ENCODE measurements at regions of chr2 and their contacts with region 1.

Region 1: DNA sequence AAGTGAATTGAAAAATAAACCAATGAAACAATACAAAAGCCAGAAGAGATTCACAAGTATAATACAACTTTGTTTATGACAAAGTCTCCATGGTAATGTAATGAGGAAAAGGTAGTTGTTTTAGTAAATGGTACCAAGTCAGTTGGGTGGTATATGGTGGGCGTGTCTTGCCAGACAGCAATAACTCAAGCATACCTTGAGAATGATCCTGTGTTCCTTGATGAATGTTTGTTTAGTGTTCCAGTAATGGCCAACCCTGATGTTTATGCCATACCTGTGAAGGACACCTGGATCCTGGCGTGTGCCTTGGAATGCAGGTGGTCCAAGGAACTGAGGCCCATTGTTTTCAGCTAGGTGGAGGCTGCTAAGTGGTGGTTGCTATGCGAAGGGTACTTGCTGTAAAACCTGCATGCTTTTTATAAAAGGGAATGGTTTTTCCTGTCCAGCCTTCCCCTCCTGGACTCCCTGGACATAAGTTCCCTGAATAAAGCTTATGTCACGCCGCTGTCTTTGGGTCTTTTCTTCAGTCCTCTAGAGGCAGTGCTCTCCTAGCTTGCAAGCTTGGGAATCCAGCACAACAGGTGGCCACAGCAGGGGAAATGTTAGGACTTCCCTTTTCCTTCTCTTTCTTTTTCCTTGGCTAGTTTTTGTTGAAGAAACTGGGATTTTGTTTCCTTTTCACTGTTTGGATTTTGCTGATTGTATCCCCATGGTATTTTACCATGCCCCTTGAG is 54.7 kb downstream of the MTA3 start:
- DNase-seq: no peak
- H3K4me3 ChIP-seq: no peak overlapping the region
- H3K27ac ChIP-seq: no peak overlapping the region
- H3K4me1 ChIP-seq: no peaks in the 10 kb centered on the region
- H3K27me3 ChIP-seq: no peaks in the 10 kb centered on the region
- CTCF ChIP-seq: no peak
- POLR2A ChIP-seq: no peak

Region 2: DNA sequence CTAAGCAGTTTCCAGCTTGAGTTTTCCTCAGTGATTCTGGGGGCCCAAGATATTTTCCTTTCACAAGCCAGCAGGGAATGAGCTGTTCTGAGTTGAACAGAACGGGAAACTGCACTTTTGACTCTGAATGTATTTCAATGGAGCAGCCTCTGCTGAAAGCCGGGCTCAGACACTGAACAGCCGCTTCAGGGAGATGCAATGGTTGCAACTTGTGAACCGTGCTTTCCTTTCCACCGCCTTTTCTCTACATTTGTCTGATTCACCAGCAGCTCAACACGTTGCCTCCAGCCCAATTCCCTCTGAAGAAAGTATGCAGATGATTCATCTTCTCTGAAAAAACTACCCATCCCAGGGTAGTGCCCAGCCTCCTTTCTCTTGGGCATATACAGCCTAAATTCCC is 694.6 kb before region 1 on chr2:
- intact Hi-C with region 1: loop called (anchors 5 kb)
- DNase-seq: no peak
- H3K4me3 ChIP-seq: no peak overlapping the region
- H3K27ac ChIP-seq: no peak overlapping the region
- H3K4me1 ChIP-seq: no peaks in the 10 kb centered on the region
- H3K27me3 ChIP-seq: no peaks in the 10 kb centered on the region
- CTCF ChIP-seq: no peak
- POLR2A ChIP-seq: no peak

Region 3: GRCh38 chr2:42673989-42674579 is 51.0 kb after region 1 on chr2:
- intact Hi-C with region 1: no loop called
- DNase-seq: no peak
- H3K4me3 ChIP-seq: no peak overlapping the region
- H3K27ac ChIP-seq: no peak overlapping the region
- H3K4me1 ChIP-seq: no peaks in the 10 kb centered on the region
- H3K27me3 ChIP-seq: no peaks in the 10 kb centered on the region
- CTCF ChIP-seq: no peak
- POLR2A ChIP-seq: no peak

Measured in breast epithelium (tissue), 4 donors.